ENCODE measurements at regions of chr1 and their contacts with region 1.

Region 1: DNA sequence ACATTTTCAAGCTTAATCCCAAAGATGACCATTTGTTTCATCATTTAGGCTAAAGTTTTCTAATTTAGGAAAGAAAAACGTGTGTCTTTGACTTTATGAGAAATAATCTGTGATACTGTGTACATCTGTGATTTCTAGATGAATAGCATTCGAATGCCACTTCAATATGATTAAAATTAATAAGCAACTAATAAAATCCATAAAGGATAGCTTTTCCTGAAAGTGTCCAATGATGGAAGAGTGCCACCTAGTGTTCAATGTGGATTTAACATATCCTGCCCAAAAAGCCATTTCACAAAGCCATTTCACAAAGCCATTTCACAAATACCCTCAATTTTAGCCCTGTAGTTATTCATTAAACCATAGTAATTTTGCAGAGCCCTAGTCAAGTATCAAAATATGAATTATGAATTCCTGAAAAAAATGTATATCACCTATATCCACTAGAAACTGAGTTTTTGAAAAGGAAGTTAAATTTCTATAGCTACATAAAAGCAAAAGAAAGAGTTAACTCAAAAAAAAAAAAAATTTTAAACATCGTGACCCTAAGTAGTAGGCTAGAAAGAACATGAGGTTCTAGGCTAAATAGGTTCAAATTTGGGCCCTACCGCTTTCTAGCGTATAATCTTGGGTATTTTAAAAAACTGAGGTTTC is 19.1 kb downstream of the NME7 start:
- DNase-seq: no peak
- ATAC-seq: no peak

Region 2: GRCh38 chr1:168603501-168604110 is 744.9 kb before region 1 on chr1:
- intact Hi-C with region 1: loop called (anchors 10 kb)
- DNase-seq: peak; percentile 85
- ATAC-seq: peak; percentile 90

Region 3: DNA sequence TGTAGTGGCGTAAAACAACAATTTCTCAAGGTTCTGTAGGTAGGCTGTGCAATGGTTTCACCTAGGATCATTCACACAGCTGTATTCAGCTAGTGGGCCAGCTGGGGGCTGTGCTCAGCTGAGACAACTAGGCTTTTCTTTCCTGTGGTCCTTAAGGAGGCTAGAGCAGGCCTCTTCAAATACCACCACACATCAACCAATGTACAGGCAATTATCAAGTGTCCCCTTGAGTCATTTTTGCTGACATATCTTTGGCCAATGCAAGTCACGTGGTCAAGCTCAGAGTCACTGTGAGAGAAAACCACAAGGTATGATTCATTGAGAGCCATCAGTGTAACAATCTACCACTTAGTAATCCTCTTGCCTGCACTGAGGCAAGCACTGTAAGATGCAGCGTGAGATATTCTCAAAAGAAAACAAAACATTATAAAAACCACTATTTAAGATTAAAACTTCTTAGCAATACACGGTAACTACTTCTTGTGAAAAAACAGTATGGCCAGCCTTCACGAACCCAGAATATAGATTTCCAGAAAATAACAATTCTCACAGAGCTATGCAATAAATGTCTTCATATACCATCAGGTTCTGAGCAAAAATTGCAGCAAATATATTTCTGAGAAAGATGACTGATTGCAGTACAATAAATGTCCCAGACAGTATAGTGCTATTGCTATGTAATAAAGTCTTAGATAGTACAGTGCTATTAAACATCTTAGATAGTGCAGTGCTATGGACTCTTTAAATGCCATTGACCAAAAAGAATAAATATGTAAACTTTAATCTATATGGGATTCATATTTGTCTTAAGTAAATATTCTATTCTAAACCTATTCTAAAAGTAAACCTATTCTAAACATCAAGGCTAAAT is 36.2 kb before region 1 on chr1:
- intact Hi-C with region 1: no loop called
- DNase-seq: no peak
- ATAC-seq: no peak

Region 4: GRCh38 chr1:170388489-170388888 is 1040.0 kb after region 1 on chr1:
- intact Hi-C with region 1: no loop called
- DNase-seq: no peak
- ATAC-seq: no peak

Measured in sciatic nerve (tissue), 2 donors.